ENCODE measurements at regions of chr15 and their contacts with region 1.

Region 1: GRCh38 chr15:65377104-65377975 is 462 bp downstream of the IGDCC3 start:
- DNase-seq: peak in 3 of 5 donors; percentile 42 to 60 (median 54)
- H3K4me3 ChIP-seq: peak overlapping the region; percentile 52
- H3K27ac ChIP-seq: peak overlapping the region; percentile 45 to 47
- H3K4me1 ChIP-seq: no peaks in the 10 kb centered on the region
- H3K27me3 ChIP-seq: no peaks in the 10 kb centered on the region
- CTCF ChIP-seq: no peak
- EP300 ChIP-seq: no peak
- POLR2A ChIP-seq: no peak

Region 2: GRCh38 chr15:65326117-65326526 is 51.2 kb before region 1 on chr15:
- intact Hi-C with region 1: loop called (anchors 5 kb)
- DNase-seq: peak in 3 of 5 donors; percentile 37 to 58 (median 37)
- H3K4me3 ChIP-seq: no peak overlapping the region
- H3K27ac ChIP-seq: no peak overlapping the region
- H3K4me1 ChIP-seq: peaks cover 6% of the 10 kb centered on the region
- H3K27me3 ChIP-seq: no peaks in the 10 kb centered on the region
- CTCF ChIP-seq: no peak
- EP300 ChIP-seq: no peak
- POLR2A ChIP-seq: no peak

Region 3: DNA sequence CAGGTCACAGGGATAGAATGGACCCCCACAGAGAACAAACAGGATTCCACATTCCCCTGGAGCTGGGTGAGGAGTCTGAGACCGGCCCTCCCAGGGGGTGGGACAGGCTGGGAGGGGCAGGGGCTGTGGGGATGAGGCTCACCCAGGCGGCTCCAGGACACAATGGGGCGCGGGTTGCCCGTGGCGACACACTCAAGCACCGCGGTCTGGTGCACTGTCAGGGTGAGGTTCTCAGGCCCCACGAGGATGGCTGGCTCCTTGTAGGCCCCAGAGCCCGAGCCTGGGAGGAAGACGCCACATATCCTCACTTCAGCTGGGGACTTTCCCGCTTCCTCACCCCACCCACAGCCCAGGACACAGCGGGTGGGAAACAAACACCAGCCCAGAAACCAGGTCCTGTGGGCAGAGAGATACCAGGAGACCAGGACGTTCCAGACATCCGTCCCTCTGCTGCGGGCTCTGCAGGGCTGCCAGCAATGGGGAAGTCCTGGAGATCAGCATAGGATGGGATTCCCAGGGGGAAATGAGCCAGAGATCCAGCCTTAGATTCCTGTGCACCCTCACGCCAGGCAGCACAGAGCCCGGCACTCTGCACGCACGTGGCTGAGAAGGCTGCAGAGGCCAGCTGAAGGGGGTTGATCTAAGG is 42.6 kb before region 1 on chr15:
- intact Hi-C with region 1: loop called in 2 of 4 experiments (anchors 5 kb)
- DNase-seq: no peak
- H3K4me3 ChIP-seq: no peak overlapping the region
- H3K27ac ChIP-seq: no peak overlapping the region
- H3K4me1 ChIP-seq: peaks cover 2% of the 10 kb centered on the region
- H3K27me3 ChIP-seq: no peaks in the 10 kb centered on the region
- CTCF ChIP-seq: no peak
- EP300 ChIP-seq: no peak
- POLR2A ChIP-seq: no peak